ENCODE measurements at regions of chr15 and their contacts with region 1.

Region 1: GRCh38 chr15:91522663-91523332 is 330.7 kb upstream of the SLCO3A1 start:
- DNase-seq: no peak
- H3K4me3 Mint-ChIP-seq: no peak overlapping the region
- H3K27ac Mint-ChIP-seq: no peak overlapping the region
- H3K4me1 Mint-ChIP-seq: peaks cover 28% of the 10 kb centered on the region
- H3K27me3 Mint-ChIP-seq: no peaks in the 10 kb centered on the region

Region 2: GRCh38 chr15:91302588-91303439 is 220.0 kb before region 1 on chr15:
- CTCF ChIA-PET with region 1: interaction called, 6 read pairs
- POLR2A ChIA-PET with region 1: no interaction called
- intact Hi-C with region 1: loop called (anchors 1 kb)
- DNase-seq: peak; percentile 28
- H3K4me3 Mint-ChIP-seq: no peak overlapping the region
- H3K27ac Mint-ChIP-seq: no peak overlapping the region
- H3K4me1 Mint-ChIP-seq: peaks cover 21% of the 10 kb centered on the region
- H3K27me3 Mint-ChIP-seq: peaks cover 10% of the 10 kb centered on the region

Region 3: GRCh38 chr15:91426412-91426811 is 96.4 kb before region 1 on chr15:
- CTCF ChIA-PET with region 1: interaction called, 5 read pairs
- POLR2A ChIA-PET with region 1: no interaction called
- intact Hi-C with region 1: loop called (anchors 5 kb)
- DNase-seq: peak; percentile 75
- H3K4me3 Mint-ChIP-seq: no peak overlapping the region
- H3K27ac Mint-ChIP-seq: no peak overlapping the region
- H3K4me1 Mint-ChIP-seq: peaks cover 51% of the 10 kb centered on the region
- H3K27me3 Mint-ChIP-seq: no peaks in the 10 kb centered on the region

Measured in activated CD4-positive, alpha-beta memory T cell treated with anti-CD3 and anti-CD28 coated beads for 36 hours (primary cell).